ENCODE measurements at regions of chr2 and their contacts with region 1.

Region 1: GRCh38 chr2:96265840-96266679 is at the starts of genes CIAO1 and TMEM127:
- DNase-seq: peak; percentile 97
- ATAC-seq: peak; percentile 93
- H3K4me3 ChIP-seq: peak within 1 kb of the TSS; percentile 93 to 97 (median 95)
- H3K4me3 Mint-ChIP-seq: peak within 1 kb of the TSS; percentile 99
- H3K27ac ChIP-seq: peak within 1 kb of the TSS; percentile 82 to 85
- H3K27ac Mint-ChIP-seq: peak within 1 kb of the TSS; percentile 94
- H3K4me1 ChIP-seq: peaks cover 23 to 34% of the 10 kb centered on the region in 2 donors
- H3K4me1 Mint-ChIP-seq: peaks cover 45% of the 10 kb centered on the region
- H3K27me3 ChIP-seq: no peaks in the 10 kb centered on the region
- H3K27me3 Mint-ChIP-seq: no peaks in the 10 kb centered on the region
- CTCF ChIP-seq: peak; percentile 22
- total RNA-seq, gene CIAO1: 85.4 and 91.2 TPM in 2 replicates
- total RNA-seq, gene TMEM127: 48.0 and 48.5 TPM in 2 replicates

Region 2: DNA sequence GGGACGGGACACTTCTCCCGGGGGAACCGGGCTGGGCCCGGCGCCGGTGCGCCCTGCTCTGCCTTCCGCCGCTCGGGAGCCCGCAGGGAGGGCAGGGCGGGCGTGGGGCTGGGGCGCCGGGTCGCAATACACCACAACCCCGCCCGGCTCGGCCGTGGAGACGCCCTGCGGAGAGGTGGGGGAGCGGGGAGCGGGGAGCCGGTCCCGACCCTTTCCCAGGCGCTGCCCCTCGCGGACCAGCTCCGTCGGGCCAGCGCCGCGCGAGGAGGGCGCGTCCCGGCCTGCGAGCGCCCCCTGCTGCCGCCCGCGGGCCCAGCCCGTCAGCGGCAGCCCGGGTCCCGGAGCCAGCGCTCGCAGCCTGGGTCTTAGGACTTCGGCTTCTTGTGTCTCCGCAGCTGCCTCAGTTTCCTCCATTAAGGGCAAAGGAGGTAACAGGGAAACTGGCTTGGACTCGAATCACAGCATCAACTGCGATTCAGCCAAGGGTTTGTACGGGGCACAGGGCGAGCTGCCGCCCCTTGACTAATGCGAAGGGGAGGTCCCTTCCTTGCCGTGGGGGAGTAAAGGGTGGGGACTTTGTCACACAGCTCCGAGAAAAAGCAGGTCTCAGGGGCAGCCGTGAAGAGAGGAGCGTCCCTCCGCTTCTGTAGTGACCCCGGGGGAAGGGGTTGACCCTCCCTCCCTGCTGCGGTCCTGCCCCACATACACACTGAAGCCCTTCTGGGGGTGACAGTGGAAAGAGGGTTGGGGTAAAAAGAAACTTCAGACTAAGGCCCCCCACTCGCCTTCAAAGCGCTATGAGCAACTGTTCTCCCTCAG is 149.0 kb before region 1 on chr2:
- CTCF ChIA-PET with region 1: no interaction called
- POLR2A ChIA-PET with region 1: no interaction called
- intact Hi-C with region 1: no loop called
- DNase-seq: peak; percentile 82
- ATAC-seq: peak; percentile 79
- H3K4me3 ChIP-seq: peak overlapping the region in 4 of 5 experiments; percentile 19 to 61 (median 52)
- H3K4me3 Mint-ChIP-seq: peak overlapping the region; percentile 79
- H3K27ac ChIP-seq: no peak overlapping the region
- H3K27ac Mint-ChIP-seq: no peak overlapping the region
- H3K4me1 ChIP-seq: peaks cover 18 to 22% of the 10 kb centered on the region in 2 donors
- H3K4me1 Mint-ChIP-seq: peaks cover 26% of the 10 kb centered on the region
- H3K27me3 ChIP-seq: peaks cover 0 to 51% (median 11%) of the 10 kb centered on the region in 4 experiments
- H3K27me3 Mint-ChIP-seq: peaks cover 34% of the 10 kb centered on the region
- CTCF ChIP-seq: peak; percentile 92

Region 3: GRCh38 chr2:96138179-96139145 is 127.6 kb before region 1 on chr2 and contains the start of gene ASTL:
- CTCF ChIA-PET with region 1: interaction called, 36 read pairs
- POLR2A ChIA-PET with region 1: no interaction called
- intact Hi-C with region 1: loop called (anchors 2 kb)
- DNase-seq: peak; percentile 81
- ATAC-seq: peak; percentile 63
- H3K4me3 ChIP-seq: no peak within 1 kb of the TSS
- H3K4me3 Mint-ChIP-seq: no peak within 1 kb of the TSS
- H3K27ac ChIP-seq: no peak within 1 kb of the TSS
- H3K27ac Mint-ChIP-seq: peak within 1 kb of the TSS; percentile 41
- H3K4me1 ChIP-seq: peaks cover 10 to 20% of the 10 kb centered on the region in 2 donors
- H3K4me1 Mint-ChIP-seq: peaks cover 27% of the 10 kb centered on the region
- H3K27me3 ChIP-seq: no peaks in the 10 kb centered on the region
- H3K27me3 Mint-ChIP-seq: no peaks in the 10 kb centered on the region
- CTCF ChIP-seq: peak; percentile 67
- total RNA-seq, gene ASTL: 0.41 and 0.59 TPM in 2 replicates

Region 4: GRCh38 chr2:96241900-96242611 is 24.0 kb before region 1 on chr2:
- CTCF ChIA-PET with region 1: interaction called, 9 read pairs
- POLR2A ChIA-PET with region 1: interaction called, 12 read pairs
- intact Hi-C with region 1: loop called (anchors 2 kb)
- DNase-seq: peak; percentile 67
- ATAC-seq: peak; percentile 86
- H3K4me3 ChIP-seq: peak overlapping the region; percentile 4 to 42 (median 38)
- H3K4me3 Mint-ChIP-seq: peak overlapping the region; percentile 76
- H3K27ac ChIP-seq: peak overlapping the region; percentile 77 to 93
- H3K27ac Mint-ChIP-seq: peak overlapping the region; percentile 95
- H3K4me1 ChIP-seq: peaks cover 34 to 51% of the 10 kb centered on the region in 2 donors
- H3K4me1 Mint-ChIP-seq: peaks cover 46% of the 10 kb centered on the region
- H3K27me3 ChIP-seq: no peaks in the 10 kb centered on the region
- H3K27me3 Mint-ChIP-seq: no peaks in the 10 kb centered on the region
- CTCF ChIP-seq: no peak

Region 5: GRCh38 chr2:96287273-96287856 is 21.3 kb after region 1 on chr2:
- CTCF ChIA-PET with region 1: no interaction called
- POLR2A ChIA-PET with region 1: no interaction called
- intact Hi-C with region 1: no loop called
- DNase-seq: no peak
- ATAC-seq: no peak
- H3K4me3 ChIP-seq: no peak overlapping the region
- H3K4me3 Mint-ChIP-seq: no peak overlapping the region
- H3K27ac ChIP-seq: no peak overlapping the region
- H3K27ac Mint-ChIP-seq: no peak overlapping the region
- H3K4me1 ChIP-seq: no peaks in the 10 kb centered on the region
- H3K4me1 Mint-ChIP-seq: no peaks in the 10 kb centered on the region
- H3K27me3 ChIP-seq: no peaks in the 10 kb centered on the region
- H3K27me3 Mint-ChIP-seq: no peaks in the 10 kb centered on the region
- CTCF ChIP-seq: no peak

Region 6: DNA sequence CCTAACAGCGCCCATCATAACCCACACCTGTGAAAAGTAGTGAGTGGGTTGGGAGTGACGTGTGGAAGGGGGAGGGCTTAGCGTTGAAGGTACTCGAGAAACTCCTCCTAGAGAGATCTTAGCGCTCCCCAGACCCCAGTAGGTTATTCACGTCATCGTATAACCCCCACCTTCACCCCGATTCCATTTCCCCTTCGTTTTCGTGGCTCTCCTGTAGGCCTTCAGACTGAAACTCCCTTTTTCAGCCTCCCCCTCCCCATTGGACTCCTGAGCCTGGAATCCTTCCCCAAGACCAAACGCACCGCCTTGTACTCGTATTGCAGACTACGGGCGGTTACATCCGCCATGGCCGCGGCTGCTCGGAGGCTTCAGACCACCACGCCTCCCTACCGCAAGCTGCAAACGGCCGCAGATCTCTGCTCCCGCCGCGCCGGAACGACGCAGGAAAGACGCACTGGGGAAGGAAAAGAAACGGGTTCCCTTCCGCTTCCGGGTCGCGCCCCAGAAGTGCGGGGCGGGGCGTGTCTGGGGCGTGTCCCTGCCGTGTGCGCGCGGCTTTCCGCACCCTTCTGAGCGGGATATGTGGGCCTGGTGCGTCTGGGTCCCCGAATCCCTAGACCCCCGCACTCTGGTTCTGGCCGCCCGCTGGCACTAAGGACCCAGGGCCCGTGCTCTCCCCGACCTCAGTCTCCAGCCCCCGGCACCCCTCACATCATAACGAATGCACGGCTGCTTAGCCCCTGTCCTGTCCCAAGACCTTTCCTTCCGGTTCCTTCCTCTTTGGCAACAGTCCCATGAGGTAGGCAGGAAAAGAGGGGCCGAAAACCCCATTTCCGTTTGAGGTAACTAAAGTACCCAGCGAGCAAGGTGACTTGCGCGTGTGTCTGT is 39.3 kb after region 1 on chr2 and contains the start of gene SNRNP200:
- CTCF ChIA-PET with region 1: no interaction called
- POLR2A ChIA-PET with region 1: no interaction called
- intact Hi-C with region 1: loop called (anchors 1 kb)
- DNase-seq: peak; percentile 93
- ATAC-seq: peak; percentile 96
- H3K4me3 ChIP-seq: peak within 1 kb of the TSS; percentile 70 to 97 (median 80)
- H3K4me3 Mint-ChIP-seq: peak within 1 kb of the TSS; percentile 99
- H3K27ac ChIP-seq: peak within 1 kb of the TSS; percentile 89 to 91
- H3K27ac Mint-ChIP-seq: peak within 1 kb of the TSS; percentile 99
- H3K4me1 ChIP-seq: peaks cover 18 to 22% of the 10 kb centered on the region in 2 donors
- H3K4me1 Mint-ChIP-seq: peaks cover 51% of the 10 kb centered on the region
- H3K27me3 ChIP-seq: no peaks in the 10 kb centered on the region
- H3K27me3 Mint-ChIP-seq: no peaks in the 10 kb centered on the region
- CTCF ChIP-seq: no peak
- total RNA-seq, gene SNRNP200: 214 and 216 TPM in 2 replicates

Region 7: DNA sequence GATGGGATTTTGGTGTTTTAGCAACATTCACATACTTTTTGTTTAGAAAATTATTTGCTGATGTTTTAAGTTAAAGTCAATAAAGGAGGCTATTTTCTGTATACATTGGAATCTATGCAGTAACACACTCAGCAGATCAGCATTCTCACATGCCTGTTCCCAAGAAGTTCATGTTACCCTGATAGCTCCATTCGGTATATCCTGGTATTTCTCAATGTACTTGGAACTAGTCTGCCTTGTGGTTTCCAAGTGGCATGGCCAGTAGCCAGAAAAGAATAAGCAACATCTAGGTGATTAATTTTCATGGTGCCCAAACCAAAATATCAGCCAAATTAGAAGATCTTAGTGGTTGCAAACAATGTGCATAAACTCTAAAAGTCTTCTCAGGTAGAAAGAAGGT is 64.3 kb after region 1 on chr2:
- CTCF ChIA-PET with region 1: no interaction called
- POLR2A ChIA-PET with region 1: no interaction called
- intact Hi-C with region 1: loop called (anchors 1 kb)
- DNase-seq: no peak
- ATAC-seq: no peak
- H3K4me3 ChIP-seq: no peak overlapping the region
- H3K4me3 Mint-ChIP-seq: no peak overlapping the region
- H3K27ac ChIP-seq: no peak overlapping the region
- H3K27ac Mint-ChIP-seq: no peak overlapping the region
- H3K4me1 ChIP-seq: peaks cover 14 to 21% of the 10 kb centered on the region in 2 donors
- H3K4me1 Mint-ChIP-seq: peaks cover 23% of the 10 kb centered on the region
- H3K27me3 ChIP-seq: no peaks in the 10 kb centered on the region
- H3K27me3 Mint-ChIP-seq: no peaks in the 10 kb centered on the region
- CTCF ChIP-seq: no peak

Region 8: GRCh38 chr2:96536445-96537065 is 270.5 kb after region 1 on chr2 and contains the start of gene ARID5A:
- CTCF ChIA-PET with region 1: interaction called, 3 read pairs
- POLR2A ChIA-PET with region 1: no interaction called
- intact Hi-C with region 1: loop called (anchors 2 kb)
- DNase-seq: peak; percentile 92
- ATAC-seq: peak; percentile 71
- H3K4me3 ChIP-seq: peak within 1 kb of the TSS; percentile 28 to 85 (median 76)
- H3K4me3 Mint-ChIP-seq: peak within 1 kb of the TSS; percentile 83
- H3K27ac ChIP-seq: peak within 1 kb of the TSS; percentile 81 to 94
- H3K27ac Mint-ChIP-seq: peak within 1 kb of the TSS; percentile 97
- H3K4me1 ChIP-seq: peaks cover 38 to 55% of the 10 kb centered on the region in 2 donors
- H3K4me1 Mint-ChIP-seq: peaks cover 44% of the 10 kb centered on the region
- H3K27me3 ChIP-seq: no peaks in the 10 kb centered on the region
- H3K27me3 Mint-ChIP-seq: no peaks in the 10 kb centered on the region
- CTCF ChIP-seq: peak; percentile 45
- total RNA-seq, gene ARID5A: 93.0 and 100 TPM in 2 replicates